WTC11 (cell line): ENCODE measurements at regions of chr15 and their contacts with region 1.

Region 1: DNA sequence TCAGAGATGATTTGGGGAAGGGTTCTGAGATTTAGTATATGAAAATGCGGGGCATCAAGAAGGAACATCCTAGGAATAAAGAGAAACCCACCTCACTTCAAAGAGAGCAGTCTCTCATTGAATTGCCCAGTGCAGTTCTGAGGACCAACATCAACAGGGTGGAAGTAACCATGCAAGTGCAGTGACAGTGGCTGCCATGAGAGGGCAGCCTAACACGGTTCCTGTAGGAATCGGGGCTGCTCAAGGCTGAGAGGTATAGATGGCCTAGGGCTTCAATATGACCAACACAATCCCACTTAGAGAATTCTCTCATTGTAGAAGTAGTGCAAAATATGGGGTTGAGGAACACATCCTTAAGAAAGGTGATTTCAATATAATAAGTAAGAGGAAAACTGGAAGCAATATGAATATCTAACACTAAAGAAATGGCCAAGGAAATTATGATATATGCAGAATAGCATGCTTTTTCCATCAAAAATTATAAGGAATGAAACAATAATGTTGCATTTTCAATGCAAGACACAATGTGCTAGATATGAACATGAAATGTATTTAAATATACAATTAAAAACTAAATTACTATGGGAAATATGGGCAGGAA is 51.1 kb upstream of the ARRDC4 start:
- DNase-seq: peak; percentile 84
- ATAC-seq: peak; percentile 100
- H3K4me3 Mint-ChIP-seq: no peak overlapping the region
- H3K27ac Mint-ChIP-seq: no peak overlapping the region
- H3K4me1 Mint-ChIP-seq: peaks cover 2% of the 10 kb centered on the region
- H3K27me3 Mint-ChIP-seq: peaks cover 1% of the 10 kb centered on the region
- CTCF ChIP-seq: peak; percentile 82

Region 2: DNA sequence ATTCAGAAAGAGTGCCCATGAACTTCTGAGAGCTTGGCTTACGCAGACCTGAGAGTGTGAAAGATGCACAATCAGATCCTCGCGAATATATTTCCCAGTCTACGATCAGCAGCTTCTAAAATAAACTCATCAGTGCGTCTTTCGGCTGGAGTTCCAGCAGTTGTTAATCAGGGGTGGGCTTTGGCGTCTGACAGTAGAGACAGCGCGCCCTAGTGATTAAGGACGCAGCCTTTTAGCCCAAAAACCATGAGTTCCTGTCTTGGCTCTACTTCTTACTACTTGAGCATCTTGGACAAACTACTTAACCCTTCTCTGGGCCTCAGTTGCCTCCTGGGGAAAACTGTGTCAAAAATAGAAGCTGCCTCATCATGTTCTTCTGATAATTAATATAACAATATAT is 35.3 kb after region 1 on chr15:
- CTCF ChIA-PET with region 1: no interaction called
- POLR2A ChIA-PET with region 1: no interaction called
- DNase-seq: no peak
- ATAC-seq: no peak
- H3K4me3 Mint-ChIP-seq: no peak overlapping the region
- H3K27ac Mint-ChIP-seq: no peak overlapping the region
- H3K4me1 Mint-ChIP-seq: no peaks in the 10 kb centered on the region
- H3K27me3 Mint-ChIP-seq: no peaks in the 10 kb centered on the region
- CTCF ChIP-seq: no peak

Region 3: GRCh38 chr15:97981058-97981457 is 71.7 kb after region 1 on chr15:
- CTCF ChIA-PET with region 1: no interaction called
- POLR2A ChIA-PET with region 1: interaction called, 10 read pairs
- DNase-seq: no peak
- ATAC-seq: no peak
- H3K4me3 Mint-ChIP-seq: no peak overlapping the region
- H3K27ac Mint-ChIP-seq: no peak overlapping the region
- H3K4me1 Mint-ChIP-seq: no peaks in the 10 kb centered on the region
- H3K27me3 Mint-ChIP-seq: peaks cover 3% of the 10 kb centered on the region; the same call in 1 of the 2 replicates
- CTCF ChIP-seq: no peak